ENCODE measurements at regions of chr1 and their contacts with region 1.

Region 1: GRCh38 chr1:12434174-12434573 is 183.8 kb downstream of the DHRS3 start:
- DNase-seq: peak; percentile 88
- H3K4me3 ChIP-seq: peak overlapping the region in 1 of 3 experiments; percentile 46
- H3K27ac ChIP-seq: peak overlapping the region; percentile 88
- H3K4me1 ChIP-seq: peaks cover 55% of the 10 kb centered on the region
- H3K27me3 ChIP-seq: no peaks in the 10 kb centered on the region
- CTCF ChIP-seq: no peak
- POLR2A ChIP-seq: no peak

Region 2: DNA sequence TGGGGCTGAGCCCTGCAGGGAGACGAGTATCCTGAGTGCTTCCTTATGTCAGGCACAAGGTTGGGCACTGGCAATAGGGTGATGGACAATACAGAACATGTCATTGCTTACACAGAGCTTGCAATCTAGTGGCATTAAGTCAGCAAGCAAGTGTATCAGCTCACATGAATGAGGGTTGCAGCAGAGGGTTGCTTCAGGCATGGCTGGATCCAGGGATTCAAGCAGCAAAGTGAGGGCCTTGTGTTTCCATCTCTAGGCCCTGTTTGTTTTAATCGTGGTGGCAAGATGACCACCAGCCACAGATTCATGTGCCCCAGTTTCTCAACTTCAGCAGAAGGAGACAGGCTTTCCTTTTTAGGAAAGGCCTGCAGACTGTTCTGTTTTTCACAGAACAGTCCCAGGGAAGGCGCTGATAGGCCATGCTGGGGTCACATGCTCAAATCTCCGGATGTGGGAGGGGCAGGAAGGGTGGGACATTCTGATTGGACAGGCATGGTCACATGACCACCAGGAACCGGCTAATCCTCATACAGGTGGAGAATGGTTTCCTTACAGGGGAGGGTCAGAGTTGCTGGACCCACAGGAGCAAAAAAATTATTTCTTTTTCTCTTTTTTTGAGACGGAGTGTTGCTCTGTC is 485.2 kb before region 1 on chr1:
- CTCF ChIA-PET with region 1: no interaction called
- POLR2A ChIA-PET with region 1: no interaction called
- dilution Hi-C with region 1: no loop called
- intact Hi-C with region 1: no loop called
- DNase-seq: peak; percentile 30
- H3K4me3 ChIP-seq: no peak overlapping the region
- H3K27ac ChIP-seq: no peak overlapping the region
- H3K4me1 ChIP-seq: no peaks in the 10 kb centered on the region
- H3K27me3 ChIP-seq: no peaks in the 10 kb centered on the region
- CTCF ChIP-seq: no peak
- POLR2A ChIP-seq: no peak

Region 3: DNA sequence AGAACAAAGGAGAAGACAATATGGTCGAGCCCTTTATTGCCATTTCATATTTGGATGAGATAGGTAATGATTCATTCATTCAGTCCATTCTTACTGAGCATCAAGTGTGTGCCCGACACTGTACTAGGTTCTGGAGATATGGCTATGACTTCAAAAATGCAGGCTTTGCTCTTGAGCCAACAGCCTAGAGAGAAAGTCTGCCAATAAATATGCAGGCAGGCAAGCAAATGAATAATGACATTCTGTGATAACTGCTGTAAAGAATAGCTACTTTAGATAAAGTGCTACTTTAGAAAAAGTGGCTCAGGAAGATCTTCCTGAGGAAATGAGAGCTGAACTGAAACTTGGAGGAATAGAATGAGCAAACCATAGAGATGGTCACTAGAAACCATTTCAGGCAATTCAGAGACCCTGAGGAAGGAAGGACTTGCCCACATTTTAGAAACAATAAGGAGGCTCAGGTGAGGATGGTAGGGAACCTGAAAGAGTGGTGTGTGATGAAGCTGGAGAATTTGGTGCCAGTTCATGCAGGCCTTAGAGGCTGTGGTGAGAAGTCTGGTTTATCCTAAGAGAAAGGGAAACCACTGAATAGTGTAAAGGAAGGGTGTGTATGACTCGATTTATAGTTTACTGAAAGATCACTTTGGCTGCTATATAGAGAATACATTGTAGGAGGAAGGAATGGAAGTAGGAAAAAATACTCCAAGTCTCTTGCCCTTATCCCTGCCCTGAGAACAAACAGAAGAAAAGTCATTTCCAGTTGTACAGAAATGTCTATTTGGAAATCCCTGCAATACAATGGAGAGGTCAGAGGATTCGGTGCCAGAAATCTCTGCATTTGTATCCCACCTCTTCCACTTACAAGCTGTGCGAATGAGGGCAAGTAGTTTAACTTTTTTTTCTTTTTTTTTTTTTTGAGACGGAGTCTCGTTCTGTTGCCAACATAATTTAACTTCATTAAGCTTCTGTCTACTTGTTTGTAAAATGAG is 36.4 kb before region 1 on chr1:
- CTCF ChIA-PET with region 1: no interaction called
- POLR2A ChIA-PET with region 1: no interaction called
- dilution Hi-C with region 1: no loop called
- intact Hi-C with region 1: no loop called
- DNase-seq: peak; percentile 91
- H3K4me3 ChIP-seq: no peak overlapping the region
- H3K27ac ChIP-seq: no peak overlapping the region
- H3K4me1 ChIP-seq: peaks cover 8% of the 10 kb centered on the region
- H3K27me3 ChIP-seq: no peaks in the 10 kb centered on the region
- CTCF ChIP-seq: no peak
- POLR2A ChIP-seq: no peak

Region 4: DNA sequence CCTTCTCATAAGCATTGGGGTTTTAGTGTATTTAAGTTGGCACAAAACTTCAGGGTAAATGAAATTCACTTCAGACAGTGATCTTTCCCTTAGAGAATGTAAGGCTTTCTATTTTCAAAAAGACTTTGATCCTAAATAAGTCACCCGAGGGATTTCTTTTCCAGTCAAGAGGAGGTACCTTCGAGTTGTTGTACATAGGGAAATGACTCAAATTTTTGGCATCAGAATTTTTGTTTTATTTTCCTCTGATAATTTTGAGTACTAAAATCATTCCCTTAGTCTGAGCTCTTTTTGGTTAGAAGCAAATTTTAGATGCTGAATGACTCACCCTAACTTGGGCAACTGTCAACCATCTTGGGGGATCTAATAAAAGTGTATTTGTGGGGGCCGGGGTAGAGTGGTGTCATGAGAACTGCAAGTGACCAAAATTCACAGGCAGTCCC is 10.1 kb before region 1 on chr1:
- CTCF ChIA-PET with region 1: interaction called, 13 read pairs
- POLR2A ChIA-PET with region 1: no interaction called
- dilution Hi-C with region 1: no loop called
- intact Hi-C with region 1: loop called (anchors 1 kb)
- DNase-seq: peak; percentile 58
- H3K4me3 ChIP-seq: no peak overlapping the region
- H3K27ac ChIP-seq: peak overlapping the region; percentile 31
- H3K4me1 ChIP-seq: peaks cover 17% of the 10 kb centered on the region
- H3K27me3 ChIP-seq: no peaks in the 10 kb centered on the region
- CTCF ChIP-seq: no peak
- POLR2A ChIP-seq: no peak

Region 5: DNA sequence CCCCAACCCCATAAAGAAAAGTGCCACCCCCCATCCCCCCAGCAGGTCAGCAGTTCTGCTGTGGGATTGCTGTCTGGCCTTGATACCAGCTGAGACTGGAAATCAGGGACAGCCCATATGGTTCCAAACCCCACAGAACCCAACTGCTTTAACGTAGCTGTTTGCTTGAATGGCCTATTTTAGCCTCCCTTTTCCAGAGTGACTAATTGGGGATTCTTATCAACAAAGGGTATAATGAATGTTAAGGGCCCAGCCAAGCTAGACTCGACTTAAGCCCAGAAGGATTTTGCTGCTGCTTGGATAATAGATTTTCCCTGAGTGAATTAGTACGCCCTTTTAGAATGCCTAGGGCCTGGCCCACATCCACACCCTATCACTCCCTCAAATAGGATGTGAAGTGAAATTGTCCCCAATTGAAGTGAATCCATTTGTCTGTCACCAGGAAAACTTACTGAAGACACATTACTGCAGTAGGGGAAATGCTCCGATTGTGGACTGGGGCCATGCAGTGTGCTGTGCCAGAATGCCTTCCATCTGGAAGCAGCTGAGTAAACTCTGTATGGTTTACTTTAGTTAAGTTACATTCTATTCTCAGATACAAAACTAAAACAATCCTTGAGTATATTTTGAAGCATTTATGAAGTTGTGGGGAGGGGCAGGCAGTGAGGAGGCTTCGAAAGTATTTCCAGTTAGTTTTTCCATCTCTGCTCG is 26.9 kb after region 1 on chr1:
- CTCF ChIA-PET with region 1: interaction called, 4 read pairs
- POLR2A ChIA-PET with region 1: interaction called, 14 read pairs
- dilution Hi-C with region 1: no loop called
- intact Hi-C with region 1: no loop called
- DNase-seq: peak; percentile 97
- H3K4me3 ChIP-seq: no peak overlapping the region
- H3K27ac ChIP-seq: peak overlapping the region; percentile 64
- H3K4me1 ChIP-seq: peaks cover 36% of the 10 kb centered on the region
- H3K27me3 ChIP-seq: no peaks in the 10 kb centered on the region
- CTCF ChIP-seq: no peak
- POLR2A ChIP-seq: no peak

Region 6: GRCh38 chr1:12496154-12496913 is 62.2 kb after region 1 on chr1:
- CTCF ChIA-PET with region 1: no interaction called
- POLR2A ChIA-PET with region 1: no interaction called
- dilution Hi-C with region 1: no loop called
- intact Hi-C with region 1: no loop called
- DNase-seq: peak; percentile 69
- H3K4me3 ChIP-seq: no peak overlapping the region
- H3K27ac ChIP-seq: no peak overlapping the region
- H3K4me1 ChIP-seq: peaks cover 2% of the 10 kb centered on the region
- H3K27me3 ChIP-seq: no peaks in the 10 kb centered on the region
- CTCF ChIP-seq: no peak
- POLR2A ChIP-seq: no peak

Region 7: DNA sequence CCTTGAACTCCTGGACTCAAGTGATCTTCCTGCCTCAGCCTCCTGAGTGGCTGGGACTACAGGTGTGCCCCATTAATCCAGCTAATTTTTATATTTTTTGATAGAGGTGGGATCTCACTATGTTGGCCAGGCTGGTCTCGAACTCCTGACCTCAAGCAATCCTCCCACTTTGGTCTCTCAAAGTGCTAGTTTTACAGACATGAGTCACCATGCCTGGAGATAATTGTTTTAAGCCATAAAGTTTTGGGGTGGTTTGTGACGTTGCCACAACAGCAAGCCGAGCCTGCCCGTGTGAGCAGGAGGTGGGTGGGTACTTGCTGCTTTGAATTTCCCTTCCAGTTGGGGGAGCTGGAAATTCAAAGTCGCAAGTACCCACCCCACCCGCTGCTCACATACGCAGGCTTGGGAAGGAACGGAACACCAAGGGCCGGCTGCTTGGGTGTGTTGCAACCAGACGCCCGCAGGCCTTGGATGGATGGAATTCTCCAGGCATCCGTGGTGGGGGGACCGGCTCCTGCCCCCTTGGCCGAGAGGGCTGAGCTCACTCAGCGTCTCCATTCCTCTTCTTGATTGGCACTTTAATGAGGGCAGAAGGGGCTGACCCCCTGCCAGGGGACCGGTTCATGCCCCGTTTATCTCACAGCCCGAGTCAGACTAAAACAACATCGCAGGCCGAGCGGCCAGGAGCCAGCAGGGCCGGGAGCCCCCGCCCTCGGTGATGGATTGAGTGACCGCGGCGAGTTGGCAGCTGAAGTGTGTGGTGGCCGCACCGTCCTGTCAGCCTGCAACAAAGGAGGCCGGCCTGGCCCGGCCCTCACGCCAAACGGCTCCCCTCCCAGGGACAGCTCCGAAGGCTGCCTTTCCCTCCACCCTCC is 105.8 kb after region 1 on chr1:
- CTCF ChIA-PET with region 1: interaction called, 3 read pairs
- POLR2A ChIA-PET with region 1: interaction called, 3 read pairs
- dilution Hi-C with region 1: no loop called
- intact Hi-C with region 1: loop called (anchors 1 kb)
- DNase-seq: peak; percentile 70
- H3K4me3 ChIP-seq: no peak overlapping the region
- H3K27ac ChIP-seq: no peak overlapping the region
- H3K4me1 ChIP-seq: peaks cover 21% of the 10 kb centered on the region
- H3K27me3 ChIP-seq: no peaks in the 10 kb centered on the region
- CTCF ChIP-seq: no peak
- POLR2A ChIP-seq: no peak

Region 8: DNA sequence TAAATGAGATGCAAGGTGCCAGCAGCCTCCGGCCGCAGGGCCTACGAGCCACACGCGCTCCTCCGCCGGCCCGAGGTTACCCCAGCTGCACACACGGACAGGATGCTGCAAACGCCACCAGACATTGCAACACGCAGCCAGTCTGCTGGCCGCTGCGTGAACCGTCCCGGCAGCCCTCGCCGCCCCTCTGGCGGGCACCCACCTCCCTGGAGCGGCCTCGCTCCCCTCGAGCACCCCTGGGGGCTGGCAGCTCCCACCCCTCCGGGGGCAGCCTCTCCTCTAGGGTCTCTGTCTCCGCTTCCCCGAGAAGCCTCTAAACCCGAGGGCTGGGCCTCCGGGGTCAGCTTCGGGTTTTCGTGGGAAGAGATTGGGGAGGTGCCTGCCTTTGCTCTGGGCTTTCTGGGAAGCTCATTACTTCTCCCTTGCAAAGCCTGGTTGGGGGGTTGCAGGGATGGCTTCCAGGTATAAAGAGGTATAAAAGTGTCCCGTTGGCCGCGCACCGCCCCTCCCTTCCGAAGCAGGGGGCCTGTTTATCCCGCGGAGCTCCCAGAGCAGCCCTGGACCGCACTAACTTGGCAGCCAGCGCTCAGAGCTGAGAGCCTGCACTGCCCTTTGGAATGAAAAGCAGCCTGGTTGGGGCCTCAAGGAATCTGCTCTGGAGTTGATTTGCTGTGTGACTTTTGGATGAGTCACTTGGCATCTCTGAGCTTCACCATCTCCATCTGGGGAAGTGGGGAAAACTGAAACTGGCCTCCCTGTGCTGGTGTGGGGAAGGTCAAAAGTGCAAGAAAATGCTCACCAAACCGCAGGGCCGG is 162.0 kb after region 1 on chr1:
- CTCF ChIA-PET with region 1: interaction called, 5 read pairs
- POLR2A ChIA-PET with region 1: interaction called, 4 read pairs
- dilution Hi-C with region 1: no loop called
- intact Hi-C with region 1: loop called (anchors 1 kb)
- DNase-seq: peak; percentile 96
- H3K4me3 ChIP-seq: no peak overlapping the region
- H3K27ac ChIP-seq: peak overlapping the region; percentile 93
- H3K4me1 ChIP-seq: peaks cover 28% of the 10 kb centered on the region
- H3K27me3 ChIP-seq: no peaks in the 10 kb centered on the region
- CTCF ChIP-seq: no peak
- POLR2A ChIP-seq: peak; percentile 12